ENCODE measurements at regions of chr1 and their contacts with region 1.

Region 1: DNA sequence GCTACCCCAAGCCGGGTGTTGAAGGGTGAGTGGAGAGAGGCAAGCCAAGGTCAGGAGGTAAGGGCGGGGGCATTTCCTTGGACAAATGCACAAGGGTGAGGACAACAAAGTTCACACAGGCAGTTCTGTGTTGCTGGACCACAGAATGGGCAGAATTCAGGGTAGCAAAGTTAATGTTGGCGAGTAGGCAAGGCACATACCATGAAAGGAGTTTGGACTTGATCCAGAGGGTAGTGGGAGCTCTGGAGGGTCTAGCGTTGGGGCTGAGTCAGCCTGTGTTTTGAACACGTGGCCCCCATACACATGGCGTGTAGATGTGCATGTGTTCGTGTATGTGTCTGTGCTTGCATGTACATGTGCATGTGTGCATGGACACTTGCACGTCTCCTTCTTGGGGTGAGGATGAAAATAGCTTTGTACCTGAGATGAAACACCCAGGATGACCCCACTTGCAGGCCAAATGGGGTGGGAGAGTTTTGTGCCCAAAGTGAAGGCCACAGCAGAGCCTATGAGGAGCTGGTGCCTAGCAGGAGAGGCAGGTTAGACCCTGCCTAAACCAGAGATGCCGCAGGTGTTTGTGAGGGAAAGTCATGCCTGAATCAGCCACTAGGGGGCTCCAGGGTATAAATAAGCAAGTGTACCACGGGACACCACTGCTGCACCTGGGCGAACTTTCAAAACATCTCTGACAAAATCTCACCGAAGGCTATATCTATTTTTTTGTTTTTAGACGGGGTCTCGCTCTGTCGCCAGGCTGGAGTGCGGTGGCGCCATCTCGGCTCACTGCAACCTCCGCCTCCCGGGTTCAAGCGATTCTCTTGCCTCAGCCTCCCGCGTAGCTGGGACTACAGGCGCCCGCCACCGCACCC is 21.8 kb downstream of the SLC27A3 start:
- DNase-seq: peak; percentile 90
- CTCF ChIP-seq: peak; percentile 76

Region 2: DNA sequence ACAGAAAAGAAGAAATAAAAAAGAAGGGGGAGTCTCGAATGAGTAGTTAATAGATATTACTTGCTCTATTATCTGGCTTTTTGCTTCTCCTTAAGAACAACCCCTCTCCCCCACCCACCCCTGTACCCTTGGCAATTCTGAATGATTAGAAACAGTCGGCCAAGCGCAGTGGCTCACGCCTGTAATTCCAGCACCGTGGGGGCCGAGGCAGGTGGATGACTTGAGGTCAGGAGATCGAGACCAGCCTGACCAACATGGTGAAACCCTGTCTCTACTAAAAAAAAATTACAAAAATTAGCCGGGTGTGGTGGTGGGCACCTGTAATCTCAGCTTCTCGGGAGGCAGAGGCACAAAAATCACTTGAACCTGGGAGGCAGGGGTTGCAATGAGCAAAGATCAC is 83.0 kb after region 1 on chr1:
- in situ Hi-C with region 1: no loop called
- DNase-seq: no peak
- CTCF ChIP-seq: no peak

Region 3: DNA sequence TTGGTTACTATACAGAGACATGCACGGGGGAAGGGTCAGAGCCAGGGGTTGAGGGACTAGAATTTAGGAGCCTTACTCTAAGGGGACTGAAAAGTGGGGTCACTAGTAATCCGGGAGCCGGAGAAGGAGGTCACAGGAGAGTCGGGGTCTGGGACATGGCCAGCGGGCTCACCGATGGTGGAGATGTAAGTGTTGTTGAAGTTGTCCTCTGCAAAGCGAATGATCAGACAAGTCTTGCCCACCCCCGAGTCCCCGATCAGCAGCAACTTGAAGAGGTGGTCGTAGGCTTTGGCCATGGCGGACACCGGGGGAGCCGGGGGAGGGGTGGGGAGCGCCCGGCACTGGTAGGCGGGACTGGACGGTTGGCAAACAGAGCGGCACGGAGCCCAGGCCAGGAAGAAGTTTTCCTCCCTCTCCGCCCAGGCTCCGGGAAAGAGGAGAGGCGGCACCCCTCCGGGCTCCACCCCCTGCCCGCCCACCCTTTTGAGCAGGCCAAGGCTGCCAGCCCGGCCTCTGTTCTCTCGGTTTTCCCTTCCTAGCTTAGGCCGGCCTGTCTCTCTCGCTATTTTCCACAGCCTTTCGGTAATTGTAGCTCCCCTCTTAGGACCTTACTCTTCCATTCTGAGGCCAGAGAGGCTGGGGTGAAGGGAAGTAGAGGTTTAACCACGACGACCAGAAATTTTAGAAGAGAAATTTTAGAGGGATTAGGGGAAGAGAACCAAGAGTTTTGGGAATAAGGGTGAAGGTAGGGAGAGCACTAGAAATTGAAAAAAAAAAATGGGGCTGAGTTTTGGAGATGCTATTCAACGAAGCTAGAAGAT is 189.1 kb after region 1 on chr1 and contains the start of gene RAB13:
- in situ Hi-C with region 1: loop called (anchors 10 kb)
- DNase-seq: peak; percentile 57
- CTCF ChIP-seq: no peak